ENCODE measurements at regions of chr11 and their contacts with region 1.

Region 1: DNA sequence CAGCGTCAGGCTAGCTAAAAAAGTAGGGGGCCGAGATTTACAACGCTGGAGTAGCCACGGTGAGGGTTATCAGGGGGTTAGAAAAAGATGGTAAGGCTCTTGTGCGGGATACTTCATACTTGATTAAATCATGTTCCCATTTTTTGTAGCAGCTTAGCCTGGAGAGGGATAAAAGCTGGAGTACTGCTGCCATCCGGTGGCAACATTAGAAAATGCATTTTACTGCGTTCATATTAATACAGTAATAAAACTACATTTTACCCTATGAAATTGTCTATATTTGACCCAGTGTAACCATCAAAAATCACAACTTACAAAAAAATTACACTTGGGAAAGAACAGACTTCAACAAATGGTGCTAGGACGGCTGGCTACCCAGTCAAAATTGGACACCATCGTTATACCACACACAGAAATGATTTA is 17.3 kb downstream of the RPUSD4 start:
- DNase-seq: no peak
- H3K4me3 Mint-ChIP-seq: no peak overlapping the region
- H3K27ac Mint-ChIP-seq: no peak overlapping the region
- H3K4me1 Mint-ChIP-seq: no peaks in the 10 kb centered on the region
- H3K27me3 Mint-ChIP-seq: no peaks in the 10 kb centered on the region

Region 2: GRCh38 chr11:125842321-125842948 is 351.7 kb before region 1 on chr11:
- intact Hi-C with region 1: no loop called
- DNase-seq: no peak
- H3K4me3 Mint-ChIP-seq: no peak overlapping the region
- H3K27ac Mint-ChIP-seq: no peak overlapping the region
- H3K4me1 Mint-ChIP-seq: no peaks in the 10 kb centered on the region
- H3K27me3 Mint-ChIP-seq: peaks cover 3% of the 10 kb centered on the region

Region 3: DNA sequence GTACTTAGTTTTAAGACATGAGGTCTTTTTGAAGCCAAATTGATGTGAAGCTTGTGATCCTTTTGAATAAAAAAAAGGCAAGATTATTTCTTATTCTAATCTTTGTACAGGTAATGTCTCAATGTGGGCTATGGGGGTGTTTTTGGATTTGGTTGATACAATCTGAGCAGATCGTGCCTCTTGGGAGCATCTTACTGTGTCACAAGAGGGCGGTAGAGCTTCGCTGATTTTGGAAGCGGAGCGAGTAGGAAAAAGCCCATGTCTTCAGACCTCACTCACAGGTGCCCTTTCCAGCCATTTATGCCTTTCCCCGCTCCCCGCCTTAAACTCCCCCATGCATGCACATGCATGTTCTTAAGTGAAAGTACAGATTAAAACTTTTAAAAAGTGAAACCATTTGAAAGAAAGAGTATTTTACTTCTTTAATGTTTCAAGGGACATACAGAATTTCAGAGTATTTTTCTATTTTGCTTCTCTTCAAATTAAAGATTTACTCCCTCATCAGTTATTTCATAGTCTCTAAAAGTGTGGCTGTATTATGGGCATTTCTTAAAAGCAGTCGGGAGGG is 271.0 kb before region 1 on chr11:
- intact Hi-C with region 1: loop called (anchors 1 kb)
- DNase-seq: peak; percentile 37
- H3K4me3 Mint-ChIP-seq: no peak overlapping the region
- H3K27ac Mint-ChIP-seq: no peak overlapping the region
- H3K4me1 Mint-ChIP-seq: no peaks in the 10 kb centered on the region
- H3K27me3 Mint-ChIP-seq: peaks cover 21% of the 10 kb centered on the region

Region 4: DNA sequence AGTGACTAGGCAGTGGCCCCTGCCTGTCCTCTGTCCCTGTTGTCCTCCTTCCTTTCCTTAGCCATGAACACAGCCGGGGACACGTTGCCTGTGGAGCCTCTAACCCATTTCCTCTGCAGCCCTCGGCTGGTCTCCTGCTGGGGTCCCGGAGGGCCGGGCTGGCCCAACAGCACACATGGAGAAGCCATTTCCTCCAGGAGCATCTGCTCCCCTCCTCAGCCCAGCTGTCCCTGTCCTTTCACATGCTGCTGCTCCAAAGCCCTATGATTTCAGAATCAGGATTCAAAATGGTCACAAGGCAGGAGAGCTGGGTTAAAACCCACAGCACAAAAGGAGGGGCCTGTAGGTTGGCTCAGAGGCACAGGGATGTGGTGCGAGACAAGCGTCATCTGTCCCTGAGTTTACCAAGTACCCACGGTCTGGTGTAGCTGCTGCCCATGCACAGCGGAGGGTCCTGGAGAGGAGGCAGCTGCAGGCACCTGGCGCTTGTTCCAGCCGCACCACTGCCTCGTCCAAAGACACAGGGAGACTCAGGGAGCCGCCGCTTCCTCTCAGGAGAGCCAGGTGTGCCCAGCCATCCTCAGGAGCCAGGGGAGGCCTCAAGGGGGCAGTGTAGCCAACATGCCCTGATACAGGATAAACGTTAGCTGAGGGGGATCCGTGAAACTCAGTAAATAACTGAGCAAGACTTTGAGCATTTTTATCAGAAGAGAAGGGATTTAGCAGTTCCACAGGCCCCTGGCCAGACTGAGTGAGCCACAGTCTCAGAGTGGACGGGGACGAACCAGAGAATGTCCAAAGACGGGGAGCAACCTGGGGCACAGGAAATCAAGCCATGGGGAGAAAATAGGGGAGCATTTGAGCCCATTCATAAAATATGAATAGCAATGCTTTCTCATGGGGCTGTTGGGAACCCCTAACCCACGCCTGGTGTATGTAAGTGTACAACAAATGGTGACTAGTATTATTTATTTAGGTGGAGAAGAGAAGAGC is 252.2 kb before region 1 on chr11:
- intact Hi-C with region 1: loop called (anchors 1 kb)
- DNase-seq: peak; percentile 9
- H3K4me3 Mint-ChIP-seq: no peak overlapping the region
- H3K27ac Mint-ChIP-seq: peak overlapping the region; percentile 11
- H3K4me1 Mint-ChIP-seq: no peaks in the 10 kb centered on the region
- H3K27me3 Mint-ChIP-seq: peaks cover under 1% of the 10 kb centered on the region

Region 5: GRCh38 chr11:126115816-126116331 is 78.3 kb before region 1 on chr11:
- intact Hi-C with region 1: no loop called
- DNase-seq: no peak
- H3K4me3 Mint-ChIP-seq: no peak overlapping the region
- H3K27ac Mint-ChIP-seq: no peak overlapping the region
- H3K4me1 Mint-ChIP-seq: no peaks in the 10 kb centered on the region
- H3K27me3 Mint-ChIP-seq: no peaks in the 10 kb centered on the region

Region 6: DNA sequence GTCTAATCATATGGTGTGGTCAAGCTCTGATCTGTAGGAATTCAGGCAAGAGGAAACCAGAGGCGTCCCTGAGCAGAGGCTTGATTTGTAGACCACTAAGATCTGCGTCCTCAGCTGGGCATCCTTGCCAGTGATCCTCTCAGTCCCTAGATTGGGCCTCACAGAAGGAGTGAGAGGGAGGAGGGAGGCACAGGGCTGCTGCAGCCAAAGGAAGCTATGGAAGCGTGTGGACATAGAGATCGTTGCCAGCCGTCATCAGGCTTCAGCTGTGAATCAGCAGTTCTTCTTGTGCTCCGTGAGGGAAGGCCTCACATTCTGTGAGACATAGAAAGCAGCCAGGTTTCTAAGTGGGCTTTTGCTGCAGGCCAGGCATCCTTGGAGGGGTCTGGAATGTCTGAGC is 1061.1 kb after region 1 on chr11:
- intact Hi-C with region 1: no loop called
- DNase-seq: no peak
- H3K4me3 Mint-ChIP-seq: no peak overlapping the region
- H3K27ac Mint-ChIP-seq: no peak overlapping the region
- H3K4me1 Mint-ChIP-seq: no peaks in the 10 kb centered on the region
- H3K27me3 Mint-ChIP-seq: no peaks in the 10 kb centered on the region

Measured in activated T-helper 1 cell treated with anti-CD3 and anti-CD28 coated beads, Interleukin-12 subunit alpha, Interleukin-12 subunit beta, Interleukin-2, Interleukin-4 antibody, amounts not matched to agents 30 ng/mL and 10 ng/mL and 1 ng/mL, durations not matched to agents 14 hours and 24 hours and 36 hours (primary cell).